ENCODE measurements at regions of chr12 and their contacts with region 1.

Region 1: GRCh38 chr12:31959701-31960391 is 631 bp downstream of the RESF1 start:
- DNase-seq: peak; percentile 60
- H3K4me3 Mint-ChIP-seq: peak overlapping the region; percentile 78
- H3K27ac Mint-ChIP-seq: peak overlapping the region; percentile 71
- H3K4me1 Mint-ChIP-seq: peaks cover 26% of the 10 kb centered on the region
- H3K27me3 Mint-ChIP-seq: no peaks in the 10 kb centered on the region
- CTCF ChIP-seq: no peak

Region 2: GRCh38 chr12:31682136-31682962 is 277.5 kb before region 1 on chr12:
- CTCF ChIA-PET with region 1: no interaction called
- intact Hi-C with region 1: loop called (anchors 5 kb)
- DNase-seq: peak; percentile 81
- H3K4me3 Mint-ChIP-seq: peak overlapping the region; percentile 2
- H3K27ac Mint-ChIP-seq: peak overlapping the region; percentile 54
- H3K4me1 Mint-ChIP-seq: peaks cover 10% of the 10 kb centered on the region
- H3K27me3 Mint-ChIP-seq: no peaks in the 10 kb centered on the region
- CTCF ChIP-seq: peak; percentile 84

Region 3: GRCh38 chr12:31773867-31774266 is 186.0 kb before region 1 on chr12:
- CTCF ChIA-PET with region 1: no interaction called
- intact Hi-C with region 1: loop called (anchors 5 kb)
- DNase-seq: peak; percentile 55
- H3K4me3 Mint-ChIP-seq: no peak overlapping the region
- H3K27ac Mint-ChIP-seq: peak overlapping the region; percentile 76
- H3K4me1 Mint-ChIP-seq: peaks cover 27% of the 10 kb centered on the region
- H3K27me3 Mint-ChIP-seq: no peaks in the 10 kb centered on the region
- CTCF ChIP-seq: no peak

Region 4: GRCh38 chr12:31999692-32000091 is 39.8 kb after region 1 on chr12:
- CTCF ChIA-PET with region 1: no interaction called
- intact Hi-C with region 1: no loop called
- DNase-seq: no peak
- H3K4me3 Mint-ChIP-seq: no peak overlapping the region
- H3K27ac Mint-ChIP-seq: no peak overlapping the region
- H3K4me1 Mint-ChIP-seq: no peaks in the 10 kb centered on the region
- H3K27me3 Mint-ChIP-seq: no peaks in the 10 kb centered on the region
- CTCF ChIP-seq: no peak

Region 5: DNA sequence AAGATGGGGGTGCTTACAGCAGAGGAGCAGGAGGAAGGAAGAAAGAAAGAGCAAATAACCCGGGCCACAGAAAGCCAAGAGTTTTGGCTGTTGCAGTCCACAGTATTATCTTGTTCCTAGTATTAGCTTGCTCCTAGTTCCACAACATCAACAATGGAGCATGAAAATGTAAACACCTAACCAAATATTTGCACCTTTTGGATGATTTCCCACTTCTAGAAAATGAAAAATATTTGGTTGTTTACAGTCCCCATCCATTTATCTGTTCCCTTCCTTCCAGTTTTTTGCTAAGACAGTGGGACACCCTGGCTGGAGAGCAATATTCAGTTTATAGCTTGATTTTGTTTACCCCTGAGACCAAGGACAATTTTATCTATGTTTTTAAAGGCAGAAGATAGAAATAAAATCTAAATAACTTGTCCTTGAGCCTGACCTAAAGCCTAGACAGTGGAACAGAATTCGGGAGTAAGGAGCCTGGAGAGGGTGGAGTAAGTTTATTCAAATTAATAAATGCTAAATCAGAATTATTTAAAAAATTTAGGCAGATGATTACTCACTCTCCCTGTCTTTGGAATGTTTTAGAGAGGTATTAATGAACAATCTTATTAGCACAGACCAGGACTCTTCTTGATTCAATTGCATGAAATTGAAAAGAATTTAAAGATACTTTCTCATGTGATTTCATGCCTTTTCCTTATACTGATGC is 50.9 kb after region 1 on chr12:
- CTCF ChIA-PET with region 1: interaction called, 11 read pairs
- intact Hi-C with region 1: no loop called
- DNase-seq: no peak
- H3K4me3 Mint-ChIP-seq: no peak overlapping the region
- H3K27ac Mint-ChIP-seq: no peak overlapping the region
- H3K4me1 Mint-ChIP-seq: no peaks in the 10 kb centered on the region
- H3K27me3 Mint-ChIP-seq: no peaks in the 10 kb centered on the region
- CTCF ChIP-seq: no peak

Measured in Calu3 (cell line).